ENCODE measurements at regions of chr3 and their contacts with region 1.

Region 1: DNA sequence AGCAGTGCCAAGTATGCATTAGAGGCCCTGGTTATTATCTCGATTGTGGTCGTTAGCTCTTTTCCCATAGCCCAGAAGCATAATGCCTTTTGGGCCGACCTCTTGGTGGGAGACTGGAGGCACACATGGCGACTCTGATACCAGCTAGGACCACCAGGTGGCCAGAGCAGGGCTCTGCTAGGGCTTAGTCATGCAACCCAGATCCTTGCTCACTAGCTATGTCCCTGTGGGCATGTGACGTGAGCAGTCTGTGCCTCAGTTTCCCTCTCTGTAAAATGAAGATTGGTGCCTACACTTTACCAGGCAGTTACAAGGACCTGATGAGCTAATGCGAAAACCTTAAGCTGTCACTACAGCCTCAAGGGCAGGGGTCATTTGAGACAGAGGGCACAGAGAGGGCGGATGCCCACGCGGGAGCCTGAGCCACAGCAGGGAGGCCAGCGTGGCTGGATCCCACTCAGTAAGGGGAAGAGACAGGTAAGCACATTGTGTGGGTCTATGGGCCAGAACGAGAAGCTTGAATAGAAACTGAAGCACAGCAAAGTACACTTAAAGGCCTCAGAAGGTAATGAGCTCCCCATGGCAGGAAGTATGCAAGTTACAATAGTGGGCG is 8.8 kb downstream of the KLF15 start:
- DNase-seq: peak in 1 of 2 donors; percentile 1
- ATAC-seq: no peak
- H3K4me3 ChIP-seq: no peak overlapping the region
- H3K27ac ChIP-seq: no peak overlapping the region
- H3K4me1 ChIP-seq: peaks cover 5 to 82% (median 52%) of the 10 kb centered on the region in 9 donors
- H3K27me3 ChIP-seq: no peaks in the 10 kb centered on the region
- CTCF ChIP-seq: no peak

Region 2: GRCh38 chr3:126287536-126288241 is 60.7 kb before region 1 on chr3:
- intact Hi-C with region 1: loop called in 3 of 10 experiments (anchors 5 kb)
- DNase-seq: peak; percentile 62 to 71
- ATAC-seq: peak; percentile 82 to 96 (median 93)
- H3K4me3 ChIP-seq: peak overlapping the region; percentile 14 to 57 (median 49)
- H3K27ac ChIP-seq: peak overlapping the region; percentile 63 to 88 (median 80)
- H3K4me1 ChIP-seq: peaks cover 0 to 30% (median 17%) of the 10 kb centered on the region in 9 donors
- H3K27me3 ChIP-seq: peaks cover 0 to 46% (median 3%) of the 10 kb centered on the region in 7 donors
- CTCF ChIP-seq: no peak

Region 3: GRCh38 chr3:126293370-126294082 is 54.9 kb before region 1 on chr3:
- intact Hi-C with region 1: loop called in 3 of 10 experiments (anchors 5 kb)
- DNase-seq: peak; percentile 15 to 36
- ATAC-seq: peak; percentile 42 to 97 (median 76)
- H3K4me3 ChIP-seq: no peak overlapping the region
- H3K27ac ChIP-seq: peak overlapping the region in 9 of 10 donors; percentile 12 to 75 (median 53)
- H3K4me1 ChIP-seq: peaks cover 0 to 8% (median 1%) of the 10 kb centered on the region in 9 donors
- H3K27me3 ChIP-seq: peaks cover 0 to 12% (median 0%) of the 10 kb centered on the region in 7 donors
- CTCF ChIP-seq: no peak

Region 4: DNA sequence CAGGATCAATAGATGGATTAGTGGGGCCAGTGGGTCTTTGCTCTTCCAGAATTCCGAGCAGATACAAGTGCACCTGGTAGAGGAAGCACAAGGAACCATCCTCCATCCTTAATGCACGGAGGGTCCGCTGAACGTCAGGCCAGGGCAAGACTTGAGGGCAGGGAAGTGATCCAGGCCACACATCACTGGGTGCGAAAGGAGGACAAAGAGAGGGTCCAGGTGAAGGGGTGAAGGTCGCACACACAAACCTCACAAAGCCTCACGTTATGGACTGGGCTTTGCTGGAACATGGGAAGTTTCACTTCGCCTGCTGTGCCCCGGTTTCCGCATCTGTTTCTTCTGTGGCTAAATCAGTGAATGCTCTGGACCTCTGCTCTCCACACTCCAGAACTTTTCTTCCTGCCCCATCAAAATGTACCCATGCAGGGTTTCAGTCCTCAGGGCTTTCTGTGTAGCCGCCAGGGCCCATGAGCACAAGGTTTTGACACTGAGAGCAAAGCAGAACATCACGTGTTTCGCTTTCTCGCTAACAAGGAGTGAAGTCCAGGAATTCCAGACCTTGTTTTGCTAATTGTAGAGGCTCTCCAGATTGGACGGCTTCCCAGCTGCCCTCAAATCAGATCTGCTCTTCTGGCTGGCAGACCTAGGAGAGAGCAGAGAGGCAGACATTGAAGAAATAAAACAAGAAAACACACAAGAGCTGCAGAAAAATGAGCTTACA is 47.5 kb before region 1 on chr3:
- intact Hi-C with region 1: loop called in 1 of 10 experiments (anchors 5 kb)
- DNase-seq: peak; percentile 40 to 62
- ATAC-seq: peak; percentile 61 to 98 (median 94)
- H3K4me3 ChIP-seq: no peak overlapping the region
- H3K27ac ChIP-seq: peak overlapping the region in 9 of 10 donors; percentile 56 to 76 (median 72)
- H3K4me1 ChIP-seq: peaks cover 0 to 12% (median 0%) of the 10 kb centered on the region in 9 donors
- H3K27me3 ChIP-seq: no peaks in the 10 kb centered on the region
- CTCF ChIP-seq: no peak

Region 5: DNA sequence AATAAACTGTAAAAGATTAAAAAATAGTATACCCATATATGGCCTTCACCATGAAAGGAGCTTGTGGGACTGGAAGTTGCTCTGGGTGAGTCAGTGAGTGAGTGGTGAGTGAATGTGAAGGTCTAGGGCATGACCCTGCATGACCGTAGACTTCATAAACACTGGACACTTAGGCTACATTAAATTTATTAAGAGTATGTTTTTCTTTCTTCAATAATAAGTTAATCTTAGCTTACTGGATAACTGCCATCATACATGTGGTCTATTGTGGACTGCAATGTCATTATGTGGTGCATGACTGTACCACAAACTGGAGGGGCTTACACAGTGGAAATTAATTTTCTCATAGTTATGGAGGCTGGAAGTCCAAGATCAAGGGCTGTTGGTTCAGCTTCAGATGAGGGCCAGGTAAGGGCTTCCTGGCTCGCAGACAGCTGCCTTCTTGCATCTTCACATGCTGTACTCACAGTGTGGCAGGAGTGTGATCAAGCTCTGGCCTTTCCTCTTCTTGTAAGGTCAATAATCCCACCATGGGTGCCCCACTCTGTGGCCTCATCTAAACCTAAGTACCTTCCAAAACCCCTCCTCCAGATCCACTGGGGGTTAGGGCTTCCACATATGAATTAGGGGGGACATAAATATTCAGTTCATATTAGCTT is 803.7 kb after region 1 on chr3:
- intact Hi-C with region 1: no loop called
- DNase-seq: no peak
- ATAC-seq: no peak
- H3K4me3 ChIP-seq: no peak overlapping the region
- H3K27ac ChIP-seq: no peak overlapping the region
- H3K4me1 ChIP-seq: peaks cover 0 to 2% (median 0%) of the 10 kb centered on the region in 9 donors
- H3K27me3 ChIP-seq: peaks cover 0 to 8% (median 2%) of the 10 kb centered on the region in 7 donors
- CTCF ChIP-seq: no peak

Measured in heart right ventricle (tissue), 16 donors.